ENCODE measurements at regions of chr3 and their contacts with region 1.

Region 1: GRCh38 chr3:119498186-119498987 is at the start of gene TIMMDC1:
- DNase-seq: peak; percentile 95 to 99 (median 98)
- H3K4me3 ChIP-seq: peak within 1 kb of the TSS; percentile 66 to 100 (median 95)
- H3K27ac ChIP-seq: peak within 1 kb of the TSS in 58 of 59 donors; percentile 23 to 93 (median 82)
- H3K27me3 ChIP-seq: no peaks in the 10 kb centered on the region
- CTCF ChIP-seq: peak in 25 of 56 donors; percentile 7 to 50 (median 24)
- total RNA-seq, gene TIMMDC1: 64.2 to 117 (median 91.3) TPM

Region 2: DNA sequence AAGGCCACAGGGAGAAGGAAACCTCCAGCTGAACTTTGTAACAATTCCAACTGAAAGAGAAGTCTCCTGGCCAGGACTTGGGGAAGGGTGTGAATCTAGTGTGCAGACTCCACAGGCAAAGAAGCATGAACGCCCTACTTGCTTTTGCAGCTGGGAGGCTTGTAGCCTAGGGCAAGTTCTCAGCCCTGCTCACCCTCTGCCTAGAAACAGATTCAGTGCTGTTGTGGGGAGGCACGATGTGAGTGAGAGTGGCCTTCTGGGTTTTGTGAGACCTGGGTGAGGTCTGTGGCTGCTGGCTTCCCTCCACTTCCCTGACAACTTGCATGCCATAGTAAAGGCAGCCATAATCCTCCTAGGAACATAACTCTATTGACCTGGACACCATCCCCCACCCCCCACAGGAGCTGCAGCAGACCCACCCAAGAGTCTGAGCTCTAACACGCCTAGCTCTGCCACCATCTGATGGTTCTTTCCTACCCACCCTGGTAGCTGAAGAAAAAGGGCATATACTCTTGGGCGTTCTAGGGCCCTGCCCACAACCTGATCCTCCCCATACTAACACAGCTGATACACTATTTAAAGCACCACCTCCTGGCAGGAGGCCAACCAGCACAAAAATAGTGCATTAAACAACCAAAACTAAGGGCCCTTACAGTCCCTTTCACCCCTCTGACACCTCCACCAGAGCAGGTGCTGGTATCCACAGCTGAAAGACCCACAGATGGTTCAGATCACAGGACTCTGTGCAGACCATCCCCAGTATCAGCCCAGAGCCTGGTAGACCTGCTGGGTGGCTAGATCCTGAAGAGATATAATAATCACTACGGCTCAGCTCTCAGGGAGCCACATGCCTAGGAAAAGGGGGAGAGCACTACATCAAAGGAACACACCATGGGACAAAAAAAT is 890.2 kb before region 1 on chr3:
- intact Hi-C with region 1: no loop called
- DNase-seq: no peak
- H3K4me3 ChIP-seq: no peak overlapping the region
- H3K27ac ChIP-seq: no peak overlapping the region
- H3K27me3 ChIP-seq: peaks cover 0 to 4% (median 0%) of the 10 kb centered on the region in 45 donors
- CTCF ChIP-seq: no peak

Region 3: GRCh38 chr3:119428538-119428937 is 69.8 kb before region 1 on chr3:
- intact Hi-C with region 1: no loop called
- DNase-seq: no peak
- H3K4me3 ChIP-seq: no peak overlapping the region
- H3K27ac ChIP-seq: no peak overlapping the region
- H3K27me3 ChIP-seq: no peaks in the 10 kb centered on the region
- CTCF ChIP-seq: no peak

Region 4: DNA sequence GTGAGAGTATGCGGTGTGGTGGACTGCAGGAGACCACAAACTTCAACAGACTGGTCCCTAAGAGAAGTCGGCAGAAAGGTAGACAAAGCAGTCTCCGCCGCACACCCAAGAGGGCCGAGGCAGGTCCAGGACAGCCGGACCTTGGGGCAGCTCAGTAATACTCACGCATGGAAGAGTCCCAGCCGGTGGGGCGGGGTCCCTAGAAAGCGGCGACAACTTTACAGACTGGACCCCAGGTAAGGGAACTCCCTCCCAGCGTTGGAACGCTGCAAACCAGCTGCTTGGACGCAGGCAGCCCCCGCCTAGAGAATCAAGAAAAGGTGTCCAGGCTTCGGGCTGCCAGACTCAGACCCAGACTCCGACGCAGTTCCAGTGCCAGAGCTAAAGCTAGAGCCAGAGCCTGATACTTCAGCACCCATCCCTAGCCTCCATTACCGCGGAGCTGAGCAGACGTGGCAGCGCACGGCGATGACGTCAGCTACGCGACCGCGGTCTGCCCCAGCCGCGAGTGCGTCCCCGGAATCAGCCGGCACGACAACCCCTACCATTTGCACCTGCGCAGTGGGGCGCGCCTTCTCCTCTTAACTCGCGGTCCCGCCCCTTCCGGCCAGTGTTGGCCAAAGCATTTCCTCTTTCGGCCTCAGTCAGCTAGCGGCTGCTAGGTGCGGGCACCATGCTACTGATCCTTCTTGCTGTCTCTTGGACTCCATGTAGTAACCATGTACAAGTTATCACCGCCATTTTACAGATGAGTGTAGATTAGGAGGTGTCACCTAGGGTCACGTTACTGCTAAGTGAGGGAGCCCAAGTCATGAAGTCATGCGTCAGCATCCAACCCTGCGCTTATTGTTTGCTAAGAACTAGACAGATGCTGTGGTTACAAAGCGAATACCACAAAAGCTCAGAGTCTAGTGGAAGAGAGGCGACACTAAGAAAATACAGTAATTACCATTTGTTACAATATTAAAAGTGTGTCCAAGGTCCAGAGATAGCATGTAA is 34.9 kb before region 1 on chr3 and contains the start of gene TMEM39A:
- intact Hi-C with region 1: loop called (anchors 1 kb)
- DNase-seq: peak; percentile 98 to 100 (median 99)
- H3K4me3 ChIP-seq: peak within 1 kb of the TSS; percentile 74 to 100 (median 96)
- H3K27ac ChIP-seq: peak within 1 kb of the TSS; percentile 27 to 94 (median 88)
- H3K27me3 ChIP-seq: no peaks in the 10 kb centered on the region
- CTCF ChIP-seq: peak in 53 of 56 donors; percentile 4 to 64 (median 40)
- total RNA-seq, gene TMEM39A: 8.7 to 30.1 (median 18.3) TPM

Region 5: GRCh38 chr3:119469381-119470189 is 28.8 kb before region 1 on chr3:
- intact Hi-C with region 1: loop called in 1 of 2 experiments (anchors 2 kb)
- DNase-seq: peak in 3 of 10 donors; percentile 8 to 23 (median 21)
- H3K4me3 ChIP-seq: peak overlapping the region; percentile 68 to 100 (median 93)
- H3K27ac ChIP-seq: peak overlapping the region in 49 of 59 donors; percentile 32 to 95 (median 83)
- H3K27me3 ChIP-seq: no peaks in the 10 kb centered on the region
- CTCF ChIP-seq: peak in 6 of 56 donors; percentile 0 to 26 (median 4)

Region 6: DNA sequence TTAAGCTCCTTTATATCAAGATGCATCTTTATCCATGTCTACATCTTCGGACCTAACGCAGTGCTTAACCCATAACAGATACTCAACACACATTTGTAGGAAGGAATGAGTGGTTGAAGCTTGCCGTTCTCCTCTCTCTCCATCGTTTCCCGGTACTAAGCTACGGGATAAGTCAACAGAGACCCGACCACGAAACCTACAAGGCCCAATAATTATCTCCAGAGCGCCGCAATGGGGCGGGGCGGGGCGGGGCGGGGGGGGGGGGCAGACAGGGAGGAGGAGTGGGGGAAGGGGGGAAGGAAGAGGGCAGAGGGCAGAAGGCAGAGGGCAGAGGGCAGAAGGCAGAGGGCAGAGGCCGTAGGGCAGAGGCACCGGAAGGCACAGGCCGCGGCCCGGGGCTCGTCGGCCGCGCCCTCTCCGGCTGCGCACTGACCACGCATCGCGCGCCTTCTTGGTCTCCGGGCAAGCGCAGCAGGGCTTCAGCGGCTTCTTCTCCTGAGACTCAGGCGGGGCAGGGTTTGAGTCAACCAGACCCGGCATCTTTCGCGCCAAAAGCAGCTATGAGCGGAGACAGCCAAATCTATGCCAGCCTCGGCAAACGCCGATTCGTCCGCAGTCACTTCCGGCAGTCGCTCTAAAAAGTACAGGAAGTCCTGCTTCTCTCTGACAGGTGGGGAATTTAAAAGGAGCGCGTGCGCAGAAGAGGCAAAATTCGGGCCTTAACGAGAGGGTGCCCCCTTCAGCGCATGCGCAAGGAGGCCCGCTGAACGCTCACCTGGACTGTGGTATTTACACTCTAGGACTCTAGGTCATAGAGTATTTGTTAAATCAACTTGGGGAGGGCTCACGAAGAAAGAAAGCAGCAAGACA is 178.6 kb after region 1 on chr3 and contains the start of gene COX17:
- intact Hi-C with region 1: loop called (anchors 1 to 2 kb)
- DNase-seq: peak; percentile 82 to 95 (median 92)
- H3K4me3 ChIP-seq: peak within 1 kb of the TSS; percentile 57 to 89 (median 79)
- H3K27ac ChIP-seq: peak within 1 kb of the TSS; percentile 67 to 98 (median 93)
- H3K27me3 ChIP-seq: no peaks in the 10 kb centered on the region
- CTCF ChIP-seq: peak in 18 of 56 donors; percentile 9 to 47 (median 20)
- total RNA-seq, gene COX17: 24.5 to 55.4 (median 36.6) TPM

Measured in dorsolateral prefrontal cortex (tissue), 120 donors.